Cardiac septum (tissue), 1 donor: ENCODE measurements at regions of chr9 and their contacts with region 1.

Region 1: DNA sequence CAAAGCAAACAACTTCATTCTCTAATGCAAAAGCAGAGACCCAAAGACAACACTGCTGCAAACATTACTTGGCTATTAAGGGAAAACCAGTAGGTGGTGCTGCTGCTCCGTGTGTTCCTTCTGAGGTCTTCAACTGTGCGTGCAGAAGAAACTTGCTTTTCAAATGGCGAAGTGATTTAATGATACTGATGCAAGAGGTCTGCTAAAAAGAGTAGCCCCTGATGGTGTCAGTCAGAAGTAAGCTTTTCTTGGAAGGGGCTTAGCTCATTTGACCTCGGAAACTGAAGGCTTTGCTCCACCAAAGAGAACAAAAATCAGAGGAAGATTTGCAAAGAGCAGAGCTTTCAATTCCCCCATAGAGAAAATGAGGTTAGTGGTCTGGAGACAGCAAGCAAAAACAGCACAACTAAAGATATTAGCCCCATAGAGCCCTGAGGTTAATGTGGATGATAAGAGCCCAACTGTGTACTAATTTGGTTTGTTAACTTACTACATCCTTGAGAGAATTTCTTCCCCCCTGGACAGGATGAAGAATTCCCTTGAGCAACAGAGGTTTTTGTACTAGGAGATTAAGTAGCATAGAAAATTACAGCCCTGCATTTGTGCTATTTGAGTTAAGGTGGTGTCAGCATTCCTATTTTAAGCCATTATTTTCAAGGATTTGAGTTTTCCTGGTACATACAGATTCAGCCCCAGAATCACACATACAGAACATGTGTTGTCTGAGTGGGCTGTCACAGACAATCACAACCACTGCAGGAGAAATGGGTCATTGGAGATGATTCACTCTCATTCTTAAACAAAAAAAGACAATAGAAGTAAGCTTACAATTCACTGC is 153.2 kb upstream of the C9orf72 start:
- DNase-seq: no peak

Region 2: DNA sequence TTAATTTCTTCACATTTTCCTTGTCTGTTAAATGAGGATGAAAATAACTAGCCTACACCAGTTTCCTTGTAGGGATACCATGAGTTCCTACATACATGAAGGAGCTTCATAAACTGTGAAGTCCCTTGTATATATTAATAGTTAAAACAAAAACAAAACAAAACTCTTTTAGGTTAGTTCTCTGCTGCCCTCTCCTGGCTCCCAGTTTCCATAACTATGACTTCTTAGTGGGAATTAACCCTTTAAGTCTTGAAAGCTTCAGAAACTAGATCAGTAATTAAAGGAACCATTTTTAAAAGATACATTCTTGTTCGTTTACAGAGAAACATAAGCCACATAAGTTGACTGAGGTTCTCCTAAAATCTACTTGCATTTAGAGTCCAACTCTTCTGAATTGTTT is 346.8 kb after region 1 on chr9:
- intact Hi-C with region 1: loop called (anchors 2 kb)
- DNase-seq: no peak